HCT116 (cell line): ENCODE measurements at regions of chr16 and their contacts with region 1.

Region 1: DNA sequence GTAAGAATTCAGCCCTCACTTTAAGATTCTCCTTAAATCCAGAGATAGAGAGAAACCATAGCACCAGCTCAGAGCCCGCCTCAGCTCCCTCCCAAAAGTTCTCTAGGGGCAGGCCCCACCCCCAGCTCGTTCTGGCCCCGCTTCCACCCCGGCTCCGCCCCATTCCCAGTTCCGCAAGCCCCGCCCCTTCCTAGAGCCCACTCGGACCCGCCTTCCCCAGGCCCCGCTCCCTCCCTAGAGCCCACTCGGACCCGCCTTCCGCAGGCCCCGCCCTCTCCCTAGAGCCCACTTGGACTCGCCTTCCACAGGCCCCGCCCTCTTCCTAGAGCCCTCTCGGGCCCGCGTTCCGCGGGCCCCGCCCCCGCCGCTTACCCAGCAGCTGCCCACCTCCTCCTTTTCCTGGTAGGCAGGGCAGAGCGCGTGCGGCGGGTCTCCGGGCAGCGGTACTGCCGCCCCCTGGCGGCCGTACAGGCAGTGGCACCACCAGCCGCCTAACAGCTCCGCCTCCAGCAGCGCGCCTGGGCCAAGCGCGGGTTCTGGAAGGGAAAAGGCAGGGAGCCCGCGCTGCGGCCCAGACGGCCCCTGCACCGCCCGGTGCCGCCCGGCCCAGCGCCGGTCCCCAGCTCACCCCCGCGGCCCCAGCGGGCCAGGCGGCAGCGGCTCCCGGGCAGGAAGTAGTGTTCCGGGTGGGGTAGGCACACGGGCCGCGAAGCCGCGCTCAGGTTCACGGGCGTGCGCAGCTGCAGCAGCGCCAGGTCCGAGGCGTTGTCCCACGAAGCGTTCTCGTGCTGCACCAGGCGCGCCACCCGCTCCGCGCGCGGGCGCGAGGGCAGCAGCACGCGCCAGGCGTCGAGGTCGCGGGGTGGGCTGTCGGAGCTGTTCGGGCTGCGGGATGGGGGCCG is 6.8 kb upstream of the PRSS8 start:
- DNase-seq: peak; percentile 96
- ATAC-seq: peak; percentile 85
- H3K4me3 ChIP-seq: peak overlapping the region; percentile 30 to 48
- H3K27ac ChIP-seq: peak overlapping the region; percentile 72
- H3K4me1 ChIP-seq: peaks cover 36 to 53% of the 10 kb centered on the region in 2 experiments
- H3K27me3 ChIP-seq: no peaks in the 10 kb centered on the region
- CTCF ChIP-seq: peak in 2 of 3 experiments; percentile 84 to 96; a peak in 4 of 6 replicates
- POLR2A ChIP-seq: no peak
- RAD21 ChIP-seq: no peak

Region 2: GRCh38 chr16:30761928-30762810 is 380.2 kb before region 1 on chr16 and contains the starts of genes CFAP119 and RNF40:
- CTCF ChIA-PET with region 1: no interaction called
- POLR2A ChIA-PET with region 1: no interaction called
- RAD21 ChIA-PET with region 1: no interaction called
- intact Hi-C with region 1: no loop called
- DNase-seq: peak; percentile 96
- ATAC-seq: peak; percentile 85
- H3K4me3 ChIP-seq: peak within 1 kb of the TSS; percentile 86 to 95
- H3K27ac ChIP-seq: peak within 1 kb of the TSS; percentile 75
- H3K4me1 ChIP-seq: peaks cover 14 to 24% of the 10 kb centered on the region in 2 experiments; a peak in 3 of 4 replicates
- H3K27me3 ChIP-seq: no peaks in the 10 kb centered on the region
- CTCF ChIP-seq: no peak
- POLR2A ChIP-seq: peak; percentile 56
- RAD21 ChIP-seq: no peak
- total RNA-seq, gene CFAP119: 12.6 TPM
- total RNA-seq, gene RNF40: 90.3 TPM

Region 3: DNA sequence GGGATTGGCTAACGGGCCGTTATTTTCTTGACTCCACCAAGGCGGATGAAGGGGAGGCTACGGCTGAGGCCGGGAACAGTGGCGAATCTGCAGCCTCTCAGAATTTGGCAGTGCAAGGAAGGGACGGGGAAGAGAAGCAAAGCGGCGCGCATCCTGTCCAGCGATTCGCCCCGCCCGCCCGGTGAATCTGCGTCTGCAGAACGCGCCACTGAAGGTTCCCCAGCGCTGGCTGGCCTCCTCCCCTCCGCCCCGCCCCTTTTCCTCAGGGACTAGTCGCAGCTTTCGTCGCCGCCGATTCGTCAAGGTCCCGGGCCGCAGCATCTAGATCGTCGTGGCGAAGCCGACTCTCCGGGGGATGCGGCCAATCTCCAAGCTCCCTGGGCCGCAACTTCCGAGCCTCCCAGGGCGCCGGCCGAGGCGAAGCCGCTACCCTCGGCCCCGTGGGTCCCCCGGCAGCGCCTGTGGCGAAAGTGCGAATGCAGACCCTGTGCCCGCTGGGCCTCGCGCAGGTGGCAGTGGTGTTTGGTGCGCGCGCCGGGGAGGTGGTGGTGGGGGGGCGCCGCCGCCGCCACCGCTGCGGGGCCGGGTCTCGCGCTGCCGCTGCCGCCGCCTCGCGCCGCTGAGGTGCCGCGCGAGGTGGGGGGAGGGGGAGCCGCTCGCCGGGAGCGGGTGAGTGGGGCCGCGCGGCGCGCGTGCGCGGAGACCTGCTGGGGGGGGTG is 184.7 kb before region 1 on chr16 and contains the start of gene SETD1A:
- CTCF ChIA-PET with region 1: interaction called, 13 read pairs
- POLR2A ChIA-PET with region 1: no interaction called
- RAD21 ChIA-PET with region 1: interaction called in 1 of 2 experiments, 4 read pairs
- intact Hi-C with region 1: no loop called
- DNase-seq: peak; percentile 90
- ATAC-seq: peak; percentile 79
- H3K4me3 ChIP-seq: peak within 1 kb of the TSS; percentile 74 to 88
- H3K27ac ChIP-seq: peak within 1 kb of the TSS; percentile 100
- H3K4me1 ChIP-seq: peaks cover 22 to 32% of the 10 kb centered on the region in 2 experiments
- H3K27me3 ChIP-seq: no peaks in the 10 kb centered on the region
- CTCF ChIP-seq: no peak
- POLR2A ChIP-seq: no peak
- RAD21 ChIP-seq: no peak
- total RNA-seq, gene SETD1A: 26.9 TPM

Region 4: GRCh38 chr16:31073968-31074813 is 68.2 kb before region 1 on chr16 and contains the starts of genes ZNF646 and ZNF668:
- CTCF ChIA-PET with region 1: interaction called, 5 read pairs
- POLR2A ChIA-PET with region 1: no interaction called
- RAD21 ChIA-PET with region 1: interaction called in 1 of 2 experiments, 4 read pairs
- intact Hi-C with region 1: loop called (anchors 5 kb)
- DNase-seq: peak; percentile 99
- ATAC-seq: peak; percentile 86
- H3K4me3 ChIP-seq: peak within 1 kb of the TSS; percentile 87 to 99
- H3K27ac ChIP-seq: peak within 1 kb of the TSS; percentile 100
- H3K4me1 ChIP-seq: peaks cover 8 to 18% of the 10 kb centered on the region in 2 experiments; a peak in 3 of 4 replicates
- H3K27me3 ChIP-seq: no peaks in the 10 kb centered on the region
- CTCF ChIP-seq: no peak
- POLR2A ChIP-seq: peak; percentile 61
- RAD21 ChIP-seq: no peak
- total RNA-seq, gene ZNF646: 17.7 TPM
- total RNA-seq, gene ZNF668: 16.8 TPM

Region 5: GRCh38 chr16:31094424-31095120 is 47.8 kb before region 1 on chr16 and contains the start of gene VKORC1:
- CTCF ChIA-PET with region 1: interaction called, 5 read pairs
- POLR2A ChIA-PET with region 1: interaction called, 4 read pairs
- RAD21 ChIA-PET with region 1: no interaction called
- intact Hi-C with region 1: loop called (anchors 1 kb)
- DNase-seq: peak; percentile 97
- ATAC-seq: peak; percentile 92
- H3K4me3 ChIP-seq: peak within 1 kb of the TSS; percentile 88 to 98
- H3K27ac ChIP-seq: peak within 1 kb of the TSS; percentile 85
- H3K4me1 ChIP-seq: peaks cover 13 to 27% of the 10 kb centered on the region in 2 experiments
- H3K27me3 ChIP-seq: no peaks in the 10 kb centered on the region
- CTCF ChIP-seq: no peak
- POLR2A ChIP-seq: peak; percentile 58
- RAD21 ChIP-seq: no peak
- total RNA-seq, gene VKORC1: 83.8 TPM

Region 6: DNA sequence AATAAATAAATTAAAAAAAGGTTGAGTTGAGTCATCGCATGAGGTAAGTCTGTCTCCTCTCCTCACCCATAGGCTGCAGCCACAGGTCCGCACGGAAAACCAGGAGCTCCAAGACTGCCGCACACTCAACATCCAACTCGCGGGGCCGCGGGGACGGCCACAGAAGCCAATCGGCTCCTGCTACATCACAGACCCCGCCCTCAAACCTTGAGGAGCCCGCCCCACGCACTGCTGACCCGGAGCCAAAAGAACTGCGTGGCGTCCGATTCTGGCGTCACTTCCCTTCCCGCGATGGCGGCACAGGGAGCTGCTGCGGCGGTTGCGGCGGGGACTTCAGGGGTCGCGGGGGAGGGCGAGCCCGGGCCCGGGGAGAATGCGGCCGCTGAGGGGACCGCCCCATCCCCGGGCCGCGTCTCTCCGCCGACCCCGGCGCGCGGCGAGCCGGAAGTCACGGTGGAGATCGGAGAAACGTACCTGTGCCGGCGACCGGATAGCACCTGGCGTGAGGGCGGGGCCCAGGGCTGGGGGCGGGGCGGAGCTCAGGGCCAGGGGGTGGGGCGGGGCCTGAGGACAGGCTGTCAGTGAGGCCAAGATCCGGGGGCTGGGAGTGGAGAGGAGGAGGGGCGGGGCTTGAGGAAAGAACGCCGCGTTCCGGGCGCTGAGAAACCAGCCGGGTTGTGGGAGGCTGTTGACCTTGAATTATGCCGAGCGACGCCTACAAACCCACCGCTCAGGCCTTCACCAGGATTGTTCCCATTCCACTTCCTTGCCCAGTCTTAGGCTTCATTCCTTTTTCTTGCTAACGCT is 24.8 kb before region 1 on chr16 and contains the start of gene KAT8:
- CTCF ChIA-PET with region 1: interaction called, 30 read pairs
- POLR2A ChIA-PET with region 1: interaction called, 84 read pairs
- RAD21 ChIA-PET with region 1: interaction called, 5 to 10 read pairs
- intact Hi-C with region 1: loop called (anchors 1 kb)
- DNase-seq: peak; percentile 97
- ATAC-seq: peak; percentile 92
- H3K4me3 ChIP-seq: peak within 1 kb of the TSS; percentile 70 to 82
- H3K27ac ChIP-seq: peak within 1 kb of the TSS; percentile 80
- H3K4me1 ChIP-seq: peaks cover 7 to 30% of the 10 kb centered on the region in 2 experiments; a peak in 3 of 4 replicates
- H3K27me3 ChIP-seq: no peaks in the 10 kb centered on the region
- CTCF ChIP-seq: no peak
- POLR2A ChIP-seq: peak; percentile 56
- RAD21 ChIP-seq: no peak
- total RNA-seq, gene KAT8: 44.9 TPM

Region 7: DNA sequence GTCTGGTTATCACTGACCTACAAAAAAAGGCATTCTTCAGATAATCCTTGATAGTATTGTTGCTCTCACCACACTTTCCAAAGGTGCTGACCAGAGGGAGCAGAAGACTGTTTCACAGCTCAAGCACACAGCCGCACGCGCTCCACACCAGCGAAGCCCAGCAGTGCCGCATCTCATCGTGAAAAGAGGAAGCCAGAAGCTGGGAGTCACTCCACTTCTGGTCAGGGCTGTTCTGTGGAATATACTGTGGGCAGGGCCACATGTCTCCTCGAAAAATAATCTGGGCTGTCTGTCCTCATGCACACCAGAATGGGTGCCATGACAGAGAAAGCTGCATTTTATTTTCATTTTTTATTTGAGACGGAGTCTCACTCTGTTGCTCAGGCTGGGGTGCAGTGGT is 14.8 kb after region 1 on chr16:
- CTCF ChIA-PET with region 1: interaction called, 20 read pairs
- POLR2A ChIA-PET with region 1: interaction called, 4 read pairs
- RAD21 ChIA-PET with region 1: no interaction called
- intact Hi-C with region 1: no loop called
- DNase-seq: no peak
- ATAC-seq: no peak
- H3K4me3 ChIP-seq: no peak overlapping the region
- H3K27ac ChIP-seq: no peak overlapping the region
- H3K4me1 ChIP-seq: no peaks in the 10 kb centered on the region
- H3K27me3 ChIP-seq: no peaks in the 10 kb centered on the region
- CTCF ChIP-seq: no peak
- POLR2A ChIP-seq: no peak
- RAD21 ChIP-seq: no peak

Region 8: DNA sequence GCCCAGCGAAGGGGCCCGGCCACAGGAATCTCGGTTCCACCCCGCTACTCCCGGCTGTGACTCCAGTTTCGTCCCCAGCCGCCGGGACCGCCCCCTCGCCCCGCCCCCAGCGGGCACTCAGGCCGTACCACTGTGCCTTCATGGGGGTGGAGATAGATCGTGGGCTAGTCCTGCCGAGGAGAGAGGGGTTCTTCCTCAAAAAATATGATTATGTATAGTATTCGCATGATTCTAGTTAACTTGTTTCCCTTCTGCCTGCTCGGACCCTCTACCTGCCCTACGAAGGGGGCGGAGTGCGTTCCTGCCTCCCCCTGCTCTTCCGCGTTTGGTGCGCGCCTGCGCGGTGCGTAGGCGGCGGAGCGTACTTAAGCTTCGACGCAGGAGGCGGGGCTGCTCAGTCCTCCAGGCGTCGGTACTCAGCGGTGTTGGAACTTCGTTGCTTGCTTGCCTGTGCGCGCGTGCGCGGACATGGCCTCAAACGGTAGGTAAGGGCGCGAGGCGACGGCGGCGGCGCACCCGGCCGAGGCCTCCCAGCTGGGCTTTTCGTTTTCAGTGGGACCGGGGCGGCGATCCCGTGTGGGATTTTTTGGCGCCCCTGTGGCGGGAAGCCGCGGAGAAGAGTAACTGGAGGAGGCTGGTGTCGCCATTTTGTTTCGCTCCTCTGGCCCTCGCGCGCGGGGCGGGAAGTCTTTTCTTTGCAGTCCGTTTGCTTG is 37.5 kb after region 1 on chr16 and contains the start of gene FUS:
- CTCF ChIA-PET with region 1: interaction called, 7 read pairs
- POLR2A ChIA-PET with region 1: interaction called, 17 read pairs
- RAD21 ChIA-PET with region 1: no interaction called
- intact Hi-C with region 1: no loop called
- DNase-seq: peak; percentile 76
- ATAC-seq: peak; percentile 71
- H3K4me3 ChIP-seq: peak within 1 kb of the TSS; percentile 90 to 93
- H3K27ac ChIP-seq: peak within 1 kb of the TSS; percentile 92
- H3K4me1 ChIP-seq: peaks cover 10 to 26% of the 10 kb centered on the region in 2 experiments
- H3K27me3 ChIP-seq: no peaks in the 10 kb centered on the region
- CTCF ChIP-seq: no peak
- POLR2A ChIP-seq: peak; percentile 100
- RAD21 ChIP-seq: 0 out of 2 replicates have a peak, but pooled peaks have one; percentile 5
- total RNA-seq, gene FUS: 522 TPM